ENCODE measurements at regions of chr20 and their contacts with region 1.

Region 1: GRCh38 chr20:45300961-45301360 is 5.7 kb upstream of the RBPJL start:
- DNase-seq: peak; percentile 84 to 85
- H3K4me3 ChIP-seq: no peak overlapping the region
- H3K4me3 Mint-ChIP-seq: no peak overlapping the region
- H3K27ac Mint-ChIP-seq: no peak overlapping the region
- H3K4me1 ChIP-seq: 0 out of 2 replicates have a peak, but pooled peaks cover 3% of the 10 kb centered on the region
- H3K4me1 Mint-ChIP-seq: no peaks in the 10 kb centered on the region
- H3K27me3 ChIP-seq: no peaks in the 10 kb centered on the region
- H3K27me3 Mint-ChIP-seq: peaks cover 9% of the 10 kb centered on the region
- CTCF ChIP-seq: peak; percentile 61 to 88

Region 2: DNA sequence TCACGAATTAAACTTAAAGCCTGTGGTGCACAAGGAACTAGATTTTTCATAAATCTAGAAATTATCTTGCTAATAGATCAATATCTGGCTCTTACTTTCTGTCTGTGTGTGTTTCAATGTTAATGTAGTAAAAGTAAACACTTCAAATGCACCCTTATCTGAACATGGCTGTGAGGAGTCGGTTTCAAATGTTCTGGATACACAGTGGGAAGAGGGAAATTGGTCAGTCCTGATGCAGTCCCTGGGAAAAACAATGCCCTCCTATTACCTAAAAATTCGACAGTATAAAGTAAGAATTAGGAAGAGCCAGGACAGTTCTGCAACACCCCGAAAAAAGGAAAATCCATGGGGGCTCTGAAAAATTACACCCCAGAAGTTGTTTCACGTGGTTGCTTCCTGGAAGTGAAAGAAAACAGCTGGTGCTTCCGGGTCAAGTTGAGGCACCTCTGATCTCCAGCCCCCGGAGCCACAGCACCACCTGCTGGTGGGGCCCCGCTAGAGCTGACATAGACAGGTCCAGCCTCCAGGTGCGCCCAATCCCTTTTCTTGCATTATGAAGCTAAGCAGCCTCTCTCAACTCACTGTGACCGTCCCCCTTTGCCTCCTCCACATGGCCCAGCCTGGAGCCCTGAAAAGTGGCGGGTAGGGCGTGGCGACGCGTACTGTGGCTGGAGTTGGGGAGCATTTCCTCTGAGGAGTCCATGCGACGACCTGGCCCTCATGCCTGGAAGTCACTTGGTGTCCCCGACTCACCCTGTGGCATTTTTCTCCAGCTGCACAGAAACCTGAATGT is 71.5 kb before region 1 on chr20:
- CTCF ChIA-PET with region 1: no interaction called
- POLR2A ChIA-PET with region 1: no interaction called
- intact Hi-C with region 1: no loop called
- DNase-seq: peak; percentile 68 to 81
- H3K4me3 ChIP-seq: no peak overlapping the region
- H3K4me3 Mint-ChIP-seq: peak overlapping the region; percentile 18
- H3K27ac Mint-ChIP-seq: no peak overlapping the region
- H3K4me1 ChIP-seq: no peaks in the 10 kb centered on the region
- H3K4me1 Mint-ChIP-seq: no peaks in the 10 kb centered on the region
- H3K27me3 ChIP-seq: no peaks in the 10 kb centered on the region
- H3K27me3 Mint-ChIP-seq: peaks cover 33% of the 10 kb centered on the region
- CTCF ChIP-seq: peak; percentile 83 to 93

Region 3: GRCh38 chr20:45311589-45312211 is 10.7 kb after region 1 on chr20:
- CTCF ChIA-PET with region 1: interaction called, 14 read pairs
- POLR2A ChIA-PET with region 1: no interaction called
- intact Hi-C with region 1: no loop called
- DNase-seq: peak; percentile 81 to 84
- H3K4me3 ChIP-seq: no peak overlapping the region
- H3K4me3 Mint-ChIP-seq: no peak overlapping the region
- H3K27ac Mint-ChIP-seq: no peak overlapping the region
- H3K4me1 ChIP-seq: no peaks in the 10 kb centered on the region
- H3K4me1 Mint-ChIP-seq: peaks cover 8% of the 10 kb centered on the region
- H3K27me3 ChIP-seq: no peaks in the 10 kb centered on the region; the same call in 1 of the 2 replicates
- H3K27me3 Mint-ChIP-seq: peaks cover 3% of the 10 kb centered on the region
- CTCF ChIP-seq: peak; percentile 91 to 94

Region 4: GRCh38 chr20:46283426-46284039 is 982.6 kb after region 1 on chr20:
- CTCF ChIA-PET with region 1: interaction called, 12 read pairs
- POLR2A ChIA-PET with region 1: no interaction called
- intact Hi-C with region 1: no loop called
- DNase-seq: no peak
- H3K4me3 ChIP-seq: no peak overlapping the region
- H3K4me3 Mint-ChIP-seq: no peak overlapping the region
- H3K27ac Mint-ChIP-seq: no peak overlapping the region
- H3K4me1 ChIP-seq: no peaks in the 10 kb centered on the region
- H3K4me1 Mint-ChIP-seq: no peaks in the 10 kb centered on the region
- H3K27me3 ChIP-seq: peaks cover 5% of the 10 kb centered on the region
- H3K27me3 Mint-ChIP-seq: peaks cover 34% of the 10 kb centered on the region
- CTCF ChIP-seq: no peak

Measured in Caco-2 (cell line).